ENCODE measurements at regions of chr21 and their contacts with region 1.

Region 1: GRCh38 chr21:32940079-32941014 is 85.4 kb upstream of the OLIG2 start:
- DNase-seq: peak in 4 of 5 donors; percentile 3 to 60 (median 38)
- H3K4me3 ChIP-seq: no peak overlapping the region
- H3K4me3 Mint-ChIP-seq: peak overlapping the region in 2 of 7 donors; percentile 15 to 16
- H3K27ac ChIP-seq: no peak overlapping the region
- H3K27ac Mint-ChIP-seq: no peak overlapping the region
- H3K4me1 ChIP-seq: no peaks in the 10 kb centered on the region
- H3K4me1 Mint-ChIP-seq: peaks cover 0 to 4% (median 4%) of the 10 kb centered on the region in 3 donors
- H3K27me3 ChIP-seq: no peaks in the 10 kb centered on the region
- H3K27me3 Mint-ChIP-seq: peaks cover 0 to 3% of the 10 kb centered on the region in 2 donors

Region 2: DNA sequence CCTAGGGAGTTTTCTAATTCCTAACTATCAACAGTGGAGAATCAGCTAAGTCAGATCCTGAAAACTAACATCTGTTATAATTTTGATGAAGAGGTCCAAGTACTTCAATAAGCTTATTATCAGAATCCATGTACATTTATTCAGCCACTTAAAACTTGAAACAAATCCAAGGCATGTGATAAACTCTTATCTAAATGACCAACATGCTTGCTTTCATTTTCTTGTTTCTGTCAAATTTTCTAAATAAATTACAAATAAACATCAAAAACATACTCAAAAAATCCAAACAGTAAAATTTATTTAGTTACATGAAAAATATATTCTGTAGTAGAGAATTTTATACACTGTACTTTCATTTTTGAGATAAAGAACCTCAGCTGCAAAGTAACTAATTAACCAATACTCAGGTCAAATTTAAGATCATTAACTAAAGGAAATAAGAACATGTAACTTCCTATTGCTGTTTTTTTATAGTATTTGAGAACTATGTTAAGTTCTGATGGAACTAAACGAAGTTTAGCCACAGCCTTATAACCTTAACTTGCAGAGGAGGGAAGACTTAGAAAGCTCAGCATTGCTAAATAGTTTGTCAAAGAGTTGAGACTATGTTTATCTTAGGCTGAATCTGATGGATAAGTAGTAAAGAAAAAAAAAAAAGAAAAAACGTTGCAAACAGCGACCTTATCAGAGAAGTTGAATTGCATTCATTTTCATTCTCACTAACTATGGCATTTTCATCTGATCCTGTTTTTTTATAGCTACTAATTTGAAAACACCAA is 257.5 kb before region 1 on chr21:
- CTCF ChIA-PET with region 1: no interaction called
- POLR2A ChIA-PET with region 1: no interaction called
- DNase-seq: no peak
- H3K4me3 ChIP-seq: no peak overlapping the region
- H3K4me3 Mint-ChIP-seq: no peak overlapping the region
- H3K27ac ChIP-seq: no peak overlapping the region
- H3K27ac Mint-ChIP-seq: peak overlapping the region in 2 of 8 donors; percentile 23 to 41
- H3K4me1 ChIP-seq: no peaks in the 10 kb centered on the region
- H3K4me1 Mint-ChIP-seq: no peaks in the 10 kb centered on the region
- H3K27me3 ChIP-seq: no peaks in the 10 kb centered on the region
- H3K27me3 Mint-ChIP-seq: no peaks in the 10 kb centered on the region

Region 3: GRCh38 chr21:32921632-32922230 is 18.6 kb before region 1 on chr21:
- CTCF ChIA-PET with region 1: interaction called, 12 read pairs
- POLR2A ChIA-PET with region 1: no interaction called
- DNase-seq: peak; percentile 9 to 61 (median 29)
- H3K4me3 ChIP-seq: no peak overlapping the region
- H3K4me3 Mint-ChIP-seq: no peak overlapping the region
- H3K27ac ChIP-seq: no peak overlapping the region
- H3K27ac Mint-ChIP-seq: peak overlapping the region in 2 of 8 donors; percentile 8 to 11
- H3K4me1 ChIP-seq: peaks cover 2% of the 10 kb centered on the region
- H3K4me1 Mint-ChIP-seq: peaks cover 2 to 13% (median 6%) of the 10 kb centered on the region in 3 donors
- H3K27me3 ChIP-seq: no peaks in the 10 kb centered on the region
- H3K27me3 Mint-ChIP-seq: no peaks in the 10 kb centered on the region

Region 4: GRCh38 chr21:32929633-32930038 is 10.7 kb before region 1 on chr21:
- CTCF ChIA-PET with region 1: interaction called, 21 read pairs
- POLR2A ChIA-PET with region 1: interaction called, 3 read pairs
- DNase-seq: no peak
- H3K4me3 ChIP-seq: no peak overlapping the region
- H3K4me3 Mint-ChIP-seq: peak overlapping the region; percentile 2 to 83 (median 73)
- H3K27ac ChIP-seq: no peak overlapping the region
- H3K27ac Mint-ChIP-seq: peak overlapping the region; percentile 56 to 94 (median 78)
- H3K4me1 ChIP-seq: peaks cover 42% of the 10 kb centered on the region
- H3K4me1 Mint-ChIP-seq: peaks cover 35 to 50% (median 49%) of the 10 kb centered on the region in 3 donors
- H3K27me3 ChIP-seq: no peaks in the 10 kb centered on the region
- H3K27me3 Mint-ChIP-seq: no peaks in the 10 kb centered on the region